ENCODE measurements at regions of chr15 and their contacts with region 1.

Region 1: GRCh38 chr15:52227456-52227855 is 36.3 kb upstream of the GNB5 start:
- DNase-seq: peak; percentile 90
- ATAC-seq: peak; percentile 71
- H3K4me3 ChIP-seq: no peak overlapping the region
- H3K4me3 Mint-ChIP-seq: peak overlapping the region; percentile 30
- H3K27ac ChIP-seq: peak overlapping the region; percentile 62 to 97
- H3K27ac Mint-ChIP-seq: peak overlapping the region; percentile 96
- H3K4me1 ChIP-seq: peaks cover 57 to 88% of the 10 kb centered on the region in 2 donors
- H3K4me1 Mint-ChIP-seq: peaks cover 70% of the 10 kb centered on the region
- H3K27me3 ChIP-seq: no peaks in the 10 kb centered on the region
- H3K27me3 Mint-ChIP-seq: no peaks in the 10 kb centered on the region
- CTCF ChIP-seq: peak; percentile 85

Region 2: GRCh38 chr15:51982013-51982769 is 245.3 kb before region 1 on chr15:
- CTCF ChIA-PET with region 1: no interaction called
- POLR2A ChIA-PET with region 1: no interaction called
- intact Hi-C with region 1: loop called (anchors 5 kb)
- DNase-seq: peak; percentile 72
- ATAC-seq: peak; percentile 87
- H3K4me3 ChIP-seq: no peak overlapping the region
- H3K4me3 Mint-ChIP-seq: peak overlapping the region; percentile 17
- H3K27ac ChIP-seq: no peak overlapping the region
- H3K27ac Mint-ChIP-seq: no peak overlapping the region
- H3K4me1 ChIP-seq: peaks cover 6 to 8% of the 10 kb centered on the region in 2 donors
- H3K4me1 Mint-ChIP-seq: peaks cover 9% of the 10 kb centered on the region
- H3K27me3 ChIP-seq: no peaks in the 10 kb centered on the region
- H3K27me3 Mint-ChIP-seq: no peaks in the 10 kb centered on the region
- CTCF ChIP-seq: peak; percentile 76

Region 3: DNA sequence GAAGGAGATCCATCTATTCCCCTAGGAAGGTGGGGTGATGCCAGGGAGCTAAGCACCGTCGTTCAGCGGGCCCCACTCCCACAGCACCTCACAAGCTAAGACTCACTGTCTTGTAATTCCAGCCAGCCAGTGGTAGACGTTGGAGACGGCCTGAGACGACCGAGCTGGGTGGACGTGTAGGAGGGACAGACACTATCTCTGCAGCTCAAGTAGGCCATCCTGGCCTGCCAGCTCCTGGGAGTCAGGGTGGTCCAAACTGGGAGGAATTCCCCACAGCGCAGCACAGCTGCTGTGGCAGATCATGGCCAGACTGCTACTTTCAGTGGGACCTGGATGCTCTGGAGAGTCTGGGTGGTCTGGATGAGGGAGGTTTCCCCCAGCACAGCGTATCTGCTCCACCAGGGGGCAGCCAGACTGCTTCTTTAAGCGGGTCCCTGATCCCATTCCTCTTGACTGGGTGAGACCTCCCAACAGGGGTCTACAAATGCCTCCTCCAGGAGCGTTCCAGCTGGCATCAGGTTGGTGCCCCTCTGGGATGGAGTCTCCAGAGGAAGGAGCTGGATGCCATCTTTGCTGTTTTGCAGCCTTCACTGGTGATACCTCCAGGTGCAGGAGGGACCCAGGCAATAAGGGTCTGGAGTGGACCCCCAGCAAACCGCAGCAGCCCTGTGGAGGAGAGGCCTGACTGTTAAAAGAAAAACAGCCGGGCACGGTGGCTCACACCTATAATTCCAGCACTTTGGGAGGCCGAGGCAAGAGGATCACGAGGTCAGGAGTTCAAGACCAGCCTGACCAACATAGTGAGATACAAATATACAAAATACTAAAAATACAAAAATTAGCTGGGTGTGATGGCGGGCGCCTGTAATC is 63.9 kb before region 1 on chr15:
- CTCF ChIA-PET with region 1: interaction called, 21 read pairs
- POLR2A ChIA-PET with region 1: no interaction called
- intact Hi-C with region 1: loop called (anchors 1 kb)
- DNase-seq: peak; percentile 38
- ATAC-seq: no peak
- H3K4me3 ChIP-seq: no peak overlapping the region
- H3K4me3 Mint-ChIP-seq: no peak overlapping the region
- H3K27ac ChIP-seq: no peak overlapping the region
- H3K27ac Mint-ChIP-seq: no peak overlapping the region
- H3K4me1 ChIP-seq: peaks cover 11% of the 10 kb centered on the region in 2 donors
- H3K4me1 Mint-ChIP-seq: peaks cover 37% of the 10 kb centered on the region
- H3K27me3 ChIP-seq: no peaks in the 10 kb centered on the region
- H3K27me3 Mint-ChIP-seq: no peaks in the 10 kb centered on the region
- CTCF ChIP-seq: peak; percentile 35

Region 4: DNA sequence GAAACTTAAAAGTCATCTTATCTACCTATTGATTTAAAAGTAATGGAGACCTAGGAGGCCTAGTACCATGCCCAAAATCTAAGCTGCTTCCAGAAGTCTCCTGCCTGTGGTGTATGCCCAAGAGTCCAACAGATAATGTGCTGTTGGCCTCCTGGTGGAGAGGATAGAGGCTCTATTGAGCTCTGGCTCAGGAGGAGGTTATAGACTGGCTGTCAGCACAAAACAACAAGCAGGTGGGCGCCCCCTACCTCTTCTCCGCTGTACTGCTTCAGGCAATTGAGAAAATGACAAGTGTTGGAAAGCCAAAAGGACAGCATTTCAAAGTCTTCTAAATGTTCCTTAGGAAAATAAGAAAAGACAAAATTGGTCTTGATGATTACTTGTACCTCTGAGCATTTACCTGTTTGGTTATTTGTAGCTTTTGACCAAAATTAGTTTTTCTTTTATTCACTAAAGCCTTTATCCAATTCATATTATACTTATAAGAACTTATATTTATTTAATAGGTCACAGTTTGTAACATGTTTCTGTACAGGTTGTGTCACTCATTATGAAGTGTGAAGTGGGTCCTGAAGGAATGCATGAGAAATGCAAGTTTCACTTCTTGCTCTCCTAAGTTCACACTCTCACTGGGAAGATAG is 19.0 kb before region 1 on chr15:
- CTCF ChIA-PET with region 1: interaction called, 94 read pairs
- POLR2A ChIA-PET with region 1: interaction called, 6 read pairs
- intact Hi-C with region 1: no loop called
- DNase-seq: peak; percentile 73
- ATAC-seq: peak; percentile 95
- H3K4me3 ChIP-seq: no peak overlapping the region
- H3K4me3 Mint-ChIP-seq: no peak overlapping the region
- H3K27ac ChIP-seq: no peak overlapping the region
- H3K27ac Mint-ChIP-seq: no peak overlapping the region
- H3K4me1 ChIP-seq: no peaks in the 10 kb centered on the region
- H3K4me1 Mint-ChIP-seq: no peaks in the 10 kb centered on the region
- H3K27me3 ChIP-seq: no peaks in the 10 kb centered on the region
- H3K27me3 Mint-ChIP-seq: no peaks in the 10 kb centered on the region
- CTCF ChIP-seq: peak; percentile 86

Region 5: GRCh38 chr15:52261498-52262242 is 34.2 kb after region 1 on chr15:
- CTCF ChIA-PET with region 1: interaction called, 512 read pairs
- POLR2A ChIA-PET with region 1: interaction called, 61 read pairs
- intact Hi-C with region 1: loop called (anchors 1 kb)
- DNase-seq: peak; percentile 74
- ATAC-seq: peak; percentile 100
- H3K4me3 ChIP-seq: peak overlapping the region in 2 of 5 experiments; percentile 17 to 29
- H3K4me3 Mint-ChIP-seq: peak overlapping the region; percentile 69
- H3K27ac ChIP-seq: peak overlapping the region; percentile 59 to 64
- H3K27ac Mint-ChIP-seq: peak overlapping the region; percentile 91
- H3K4me1 ChIP-seq: peaks cover 24 to 28% of the 10 kb centered on the region in 2 donors
- H3K4me1 Mint-ChIP-seq: peaks cover 32% of the 10 kb centered on the region
- H3K27me3 ChIP-seq: no peaks in the 10 kb centered on the region
- H3K27me3 Mint-ChIP-seq: no peaks in the 10 kb centered on the region
- CTCF ChIP-seq: peak; percentile 33

Region 6: GRCh38 chr15:52523192-52523591 is 295.7 kb after region 1 on chr15:
- CTCF ChIA-PET with region 1: no interaction called
- POLR2A ChIA-PET with region 1: no interaction called
- intact Hi-C with region 1: no loop called
- DNase-seq: no peak
- ATAC-seq: no peak
- H3K4me3 ChIP-seq: no peak overlapping the region
- H3K4me3 Mint-ChIP-seq: no peak overlapping the region
- H3K27ac ChIP-seq: no peak overlapping the region
- H3K27ac Mint-ChIP-seq: peak overlapping the region; percentile 3
- H3K4me1 ChIP-seq: peaks cover 15 to 17% of the 10 kb centered on the region in 2 donors
- H3K4me1 Mint-ChIP-seq: peaks cover 54% of the 10 kb centered on the region
- H3K27me3 ChIP-seq: no peaks in the 10 kb centered on the region
- H3K27me3 Mint-ChIP-seq: no peaks in the 10 kb centered on the region
- CTCF ChIP-seq: no peak

Region 7: DNA sequence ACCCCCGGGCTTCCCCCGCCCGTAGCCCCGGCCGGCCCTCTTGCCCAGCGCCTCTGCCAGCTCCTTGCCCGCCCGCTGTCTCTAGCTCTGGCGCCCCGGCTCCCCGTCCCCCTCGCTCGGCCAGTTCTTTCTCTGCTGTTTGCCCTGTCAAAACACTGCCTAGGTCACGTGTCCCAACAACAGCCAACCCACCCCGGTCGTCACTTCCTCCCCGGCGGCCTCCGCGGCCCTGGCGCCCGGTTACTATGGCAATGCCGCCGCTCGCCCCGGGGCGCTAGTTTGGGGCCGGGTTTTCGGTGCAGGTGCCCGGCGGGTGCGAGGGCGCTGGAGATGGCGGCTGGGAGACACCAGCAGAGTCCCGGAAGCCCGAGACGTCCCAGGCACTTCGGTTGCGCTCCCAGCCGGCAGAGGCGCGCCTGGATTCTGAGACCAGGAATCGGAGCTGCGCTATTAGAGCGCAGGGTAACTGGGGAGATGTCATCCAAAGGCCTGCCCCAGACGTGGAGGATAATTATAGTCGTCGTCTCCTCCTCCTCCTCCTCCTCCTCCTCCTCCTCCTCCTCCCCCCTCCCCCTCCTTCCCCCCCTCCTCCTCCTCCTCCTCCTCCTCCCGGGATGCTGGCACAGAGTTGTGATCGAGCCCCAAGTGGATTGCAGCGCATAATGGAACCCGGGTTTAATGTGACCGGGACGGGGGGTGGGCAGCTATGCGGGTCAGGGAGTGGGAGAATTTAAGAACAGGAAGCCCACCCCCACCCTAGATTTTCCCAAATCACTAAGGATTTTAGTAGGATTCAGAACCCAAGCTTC is 452.0 kb after region 1 on chr15 and contains the start of gene ATOSA:
- CTCF ChIA-PET with region 1: interaction called, 5 read pairs
- POLR2A ChIA-PET with region 1: interaction called, 5 read pairs
- intact Hi-C with region 1: loop called (anchors 2 kb)
- DNase-seq: peak; percentile 94
- ATAC-seq: peak; percentile 63
- H3K4me3 ChIP-seq: peak within 1 kb of the TSS; percentile 87 to 92 (median 88)
- H3K4me3 Mint-ChIP-seq: peak within 1 kb of the TSS; percentile 99
- H3K27ac ChIP-seq: peak within 1 kb of the TSS; percentile 92 to 97
- H3K27ac Mint-ChIP-seq: peak within 1 kb of the TSS; percentile 99
- H3K4me1 ChIP-seq: peaks cover 51 to 65% of the 10 kb centered on the region in 2 donors
- H3K4me1 Mint-ChIP-seq: peaks cover 76% of the 10 kb centered on the region
- H3K27me3 ChIP-seq: no peaks in the 10 kb centered on the region
- H3K27me3 Mint-ChIP-seq: no peaks in the 10 kb centered on the region
- CTCF ChIP-seq: no peak
- total RNA-seq, gene ATOSA: 198 and 206 TPM in 2 replicates